Breast epithelium (tissue), 4 donors: ENCODE measurements at regions of chr13 and their contacts with region 1.

Region 1: DNA sequence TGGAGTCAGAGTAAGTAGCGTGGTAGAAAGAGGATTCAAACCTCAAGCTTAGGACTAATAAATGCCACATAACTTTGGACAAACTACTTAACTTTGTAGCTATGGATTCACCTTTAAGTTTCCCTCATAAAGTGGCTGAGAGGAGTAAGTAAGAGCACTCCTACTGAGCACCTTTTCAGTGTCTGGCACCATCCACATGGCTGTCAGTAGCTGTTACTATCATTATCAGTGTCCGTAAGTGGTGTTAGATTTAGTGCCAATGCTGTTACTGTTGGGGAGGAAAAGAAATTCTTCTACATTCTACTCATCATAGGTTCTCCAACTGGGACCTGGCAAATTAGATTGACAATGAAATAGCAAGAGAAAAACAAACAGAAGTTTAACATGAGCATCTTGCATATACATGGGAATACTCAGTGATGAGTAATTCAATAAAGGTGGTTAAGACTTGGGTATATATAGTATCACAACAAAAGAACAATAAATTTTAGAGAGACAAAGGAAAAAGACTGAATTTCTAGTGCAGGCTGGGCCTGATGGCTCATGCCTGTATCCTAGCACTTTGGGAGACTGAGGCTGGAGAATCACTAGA is 165.6 kb upstream of the NBEA start:
- DNase-seq: no peak
- H3K4me3 ChIP-seq: no peak overlapping the region
- H3K27ac ChIP-seq: no peak overlapping the region
- H3K4me1 ChIP-seq: no peaks in the 10 kb centered on the region
- H3K27me3 ChIP-seq: no peaks in the 10 kb centered on the region
- CTCF ChIP-seq: no peak
- POLR2A ChIP-seq: no peak

Region 2: GRCh38 chr13:34750078-34750931 is 26.2 kb before region 1 on chr13:
- intact Hi-C with region 1: no loop called
- DNase-seq: no peak
- H3K4me3 ChIP-seq: peak overlapping the region; percentile 26 to 64 (median 44)
- H3K27ac ChIP-seq: no peak overlapping the region
- H3K4me1 ChIP-seq: no peaks in the 10 kb centered on the region
- H3K27me3 ChIP-seq: no peaks in the 10 kb centered on the region
- CTCF ChIP-seq: no peak
- POLR2A ChIP-seq: no peak

Region 3: DNA sequence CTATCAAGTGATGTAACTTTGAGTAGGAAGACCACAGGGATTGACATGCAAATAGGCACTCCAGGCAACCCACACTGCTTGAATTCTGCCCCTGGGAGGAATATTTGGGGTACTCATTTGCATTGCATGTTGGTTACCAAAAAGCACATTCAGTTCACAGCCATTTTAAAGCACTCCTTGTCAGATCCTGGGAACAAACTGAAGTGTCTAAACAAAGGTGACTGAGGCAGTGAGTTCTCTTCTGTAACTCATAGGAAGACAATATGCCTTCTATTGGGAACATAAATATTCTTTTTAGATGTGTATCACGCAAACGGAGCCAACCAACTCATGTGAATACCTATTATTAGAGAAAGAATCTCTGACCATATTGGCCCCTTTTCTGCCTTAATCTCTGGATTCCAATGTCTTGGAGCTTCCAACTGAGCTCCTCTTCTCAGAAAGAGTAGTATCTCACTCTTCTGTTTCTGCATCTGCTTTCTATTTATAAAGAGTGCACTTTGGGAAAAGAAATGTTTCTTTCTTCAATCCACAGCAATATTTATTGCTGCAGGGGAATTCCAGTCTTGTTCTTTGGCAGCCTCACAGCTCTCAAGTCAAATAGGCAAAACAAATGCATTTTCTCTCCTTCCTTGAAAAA is 39.9 kb after region 1 on chr13:
- intact Hi-C with region 1: loop called (anchors 2 kb)
- DNase-seq: no peak
- H3K4me3 ChIP-seq: no peak overlapping the region
- H3K27ac ChIP-seq: peak overlapping the region; percentile 54 to 56
- H3K4me1 ChIP-seq: peaks cover 0 to 12% of the 10 kb centered on the region in 2 donors
- H3K27me3 ChIP-seq: no peaks in the 10 kb centered on the region
- CTCF ChIP-seq: no peak
- POLR2A ChIP-seq: no peak

Region 4: GRCh38 chr13:35388441-35389355 is 612.2 kb after region 1 on chr13:
- intact Hi-C with region 1: no loop called
- DNase-seq: no peak
- H3K4me3 ChIP-seq: no peak overlapping the region
- H3K27ac ChIP-seq: peak overlapping the region in 1 of 2 donors; percentile 28
- H3K4me1 ChIP-seq: no peaks in the 10 kb centered on the region
- H3K27me3 ChIP-seq: no peaks in the 10 kb centered on the region
- CTCF ChIP-seq: no peak
- POLR2A ChIP-seq: no peak